ENCODE measurements at regions of chr19 and their contacts with region 1.

Region 1: DNA sequence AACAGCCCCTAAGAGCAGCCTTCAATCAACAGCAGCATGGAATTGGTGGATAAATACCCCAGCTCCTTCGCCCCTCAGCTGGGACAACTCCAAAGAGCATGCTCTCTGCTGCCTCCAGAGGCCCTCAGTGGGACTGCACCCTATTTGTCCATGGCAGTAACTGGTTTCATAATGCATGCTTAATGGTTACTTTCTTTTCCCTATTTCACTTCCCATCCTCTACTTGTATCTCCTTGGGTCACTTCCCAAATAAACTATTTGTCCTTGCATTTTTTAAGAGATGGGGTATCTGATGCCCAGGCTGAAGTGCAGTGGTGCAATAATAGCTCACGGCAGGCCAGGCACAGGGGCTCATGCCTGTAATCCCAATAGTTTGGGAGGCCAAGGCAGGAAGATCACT is 13.5 kb upstream of the TPM4 start:
- DNase-seq: peak; percentile 75
- ATAC-seq: peak; percentile 45
- H3K4me3 Mint-ChIP-seq: no peak overlapping the region
- H3K27ac Mint-ChIP-seq: no peak overlapping the region
- H3K4me1 Mint-ChIP-seq: peaks cover 34% of the 10 kb centered on the region
- H3K27me3 Mint-ChIP-seq: peaks cover 12% of the 10 kb centered on the region

Region 2: GRCh38 chr19:15986701-15987100 is 76.1 kb before region 1 on chr19:
- CTCF ChIA-PET with region 1: no interaction called
- POLR2A ChIA-PET with region 1: no interaction called
- DNase-seq: no peak
- ATAC-seq: no peak
- H3K4me3 Mint-ChIP-seq: no peak overlapping the region
- H3K27ac Mint-ChIP-seq: no peak overlapping the region
- H3K4me1 Mint-ChIP-seq: peaks cover 15% of the 10 kb centered on the region
- H3K27me3 Mint-ChIP-seq: peaks cover 27% of the 10 kb centered on the region

Region 3: DNA sequence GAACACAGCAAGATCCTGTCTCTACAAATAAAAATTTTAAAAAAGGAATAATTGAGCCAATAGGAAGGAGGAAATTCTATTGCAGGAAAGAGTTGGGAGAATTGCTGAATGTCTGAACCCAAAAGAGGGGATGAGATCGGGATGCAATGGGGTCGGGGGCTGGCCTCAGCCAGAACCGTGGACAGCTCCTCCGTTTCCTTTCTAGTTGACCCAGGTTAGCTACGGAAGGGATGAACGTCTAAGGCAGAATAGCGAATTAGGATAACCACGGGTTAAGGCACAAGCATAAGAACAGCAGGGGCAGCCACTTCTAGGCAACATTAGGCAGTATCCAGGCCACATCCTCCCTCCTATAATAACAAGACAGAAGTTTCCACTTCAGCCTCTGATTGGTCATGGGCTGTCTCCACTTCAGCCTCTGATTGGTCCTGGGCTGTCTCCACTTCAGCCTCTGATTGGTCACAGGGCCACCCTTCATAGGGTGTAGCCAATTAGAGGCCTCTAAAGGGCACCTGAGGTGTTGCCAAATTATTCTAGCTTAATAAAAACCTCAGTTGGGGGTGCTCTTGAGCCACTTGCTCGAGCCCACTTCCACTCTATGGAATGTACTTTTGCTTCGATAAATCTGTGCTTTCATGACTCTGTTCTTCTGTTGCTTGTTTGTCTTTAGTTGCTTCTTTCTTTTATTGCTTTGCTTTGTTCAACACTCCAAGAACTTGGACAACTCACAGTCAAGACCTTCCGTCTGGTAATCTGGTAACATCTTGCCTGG is 11.3 kb before region 1 on chr19:
- CTCF ChIA-PET with region 1: interaction called, 12 read pairs
- POLR2A ChIA-PET with region 1: interaction called, 3 read pairs
- DNase-seq: peak; percentile 71
- ATAC-seq: peak; percentile 100
- H3K4me3 Mint-ChIP-seq: no peak overlapping the region
- H3K27ac Mint-ChIP-seq: no peak overlapping the region
- H3K4me1 Mint-ChIP-seq: peaks cover 17% of the 10 kb centered on the region
- H3K27me3 Mint-ChIP-seq: peaks cover 11% of the 10 kb centered on the region

Region 4: DNA sequence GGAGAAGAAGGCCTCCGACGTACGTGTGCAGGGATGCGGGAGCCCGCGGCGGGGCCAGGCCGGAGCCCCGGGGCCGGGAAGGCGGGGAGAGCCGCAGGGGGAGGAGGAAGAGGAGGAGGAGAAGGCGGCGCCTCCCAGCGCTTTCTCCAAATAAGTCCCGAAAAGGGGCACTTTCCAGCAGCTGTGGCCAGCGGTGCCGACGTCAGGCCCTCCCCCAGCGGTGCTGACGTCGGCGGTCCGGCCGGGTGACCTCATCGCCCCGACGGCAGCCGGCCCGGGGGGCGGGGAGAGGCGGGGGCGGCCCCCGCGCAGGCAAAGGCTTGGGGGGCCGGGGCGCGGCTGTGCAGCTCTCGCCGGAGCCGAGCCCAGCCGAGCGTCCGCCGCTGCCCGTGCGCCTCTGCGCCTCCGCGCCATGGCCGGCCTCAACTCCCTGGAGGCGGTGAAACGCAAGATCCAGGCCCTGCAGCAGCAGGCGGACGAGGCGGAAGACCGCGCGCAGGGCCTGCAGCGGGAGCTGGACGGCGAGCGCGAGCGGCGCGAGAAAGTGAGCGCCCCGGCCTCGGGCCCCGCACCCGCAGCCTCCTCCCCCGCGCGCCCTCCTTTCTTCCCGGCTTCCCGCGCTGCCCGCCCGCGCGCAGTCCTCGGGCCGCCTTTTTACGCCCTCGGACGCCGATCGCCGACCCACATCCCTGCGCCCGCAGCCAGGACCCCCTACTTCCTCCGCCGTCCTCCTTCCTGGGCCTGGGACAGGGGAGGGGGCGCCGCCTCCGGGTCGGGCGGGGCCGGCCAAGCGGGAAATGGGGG is 13.6 kb after region 1 on chr19 and contains the start of gene TPM4:
- CTCF ChIA-PET with region 1: interaction called, 92 read pairs
- POLR2A ChIA-PET with region 1: interaction called, 17 read pairs
- DNase-seq: peak; percentile 95
- ATAC-seq: peak; percentile 64
- H3K4me3 Mint-ChIP-seq: peak within 1 kb of the TSS; percentile 82
- H3K27ac Mint-ChIP-seq: peak within 1 kb of the TSS; percentile 96
- H3K4me1 Mint-ChIP-seq: peaks cover 71% of the 10 kb centered on the region
- H3K27me3 Mint-ChIP-seq: no peaks in the 10 kb centered on the region
- total RNA-seq, gene TPM4: 424 to 436 TPM

Region 5: GRCh38 chr19:16088351-16089009 is 25.7 kb after region 1 on chr19:
- CTCF ChIA-PET with region 1: interaction called, 35 read pairs
- POLR2A ChIA-PET with region 1: interaction called, 8 read pairs
- DNase-seq: no peak
- ATAC-seq: no peak
- H3K4me3 Mint-ChIP-seq: no peak overlapping the region
- H3K27ac Mint-ChIP-seq: peak overlapping the region; percentile 37
- H3K4me1 Mint-ChIP-seq: peaks cover 66% of the 10 kb centered on the region
- H3K27me3 Mint-ChIP-seq: no peaks in the 10 kb centered on the region

Region 6: DNA sequence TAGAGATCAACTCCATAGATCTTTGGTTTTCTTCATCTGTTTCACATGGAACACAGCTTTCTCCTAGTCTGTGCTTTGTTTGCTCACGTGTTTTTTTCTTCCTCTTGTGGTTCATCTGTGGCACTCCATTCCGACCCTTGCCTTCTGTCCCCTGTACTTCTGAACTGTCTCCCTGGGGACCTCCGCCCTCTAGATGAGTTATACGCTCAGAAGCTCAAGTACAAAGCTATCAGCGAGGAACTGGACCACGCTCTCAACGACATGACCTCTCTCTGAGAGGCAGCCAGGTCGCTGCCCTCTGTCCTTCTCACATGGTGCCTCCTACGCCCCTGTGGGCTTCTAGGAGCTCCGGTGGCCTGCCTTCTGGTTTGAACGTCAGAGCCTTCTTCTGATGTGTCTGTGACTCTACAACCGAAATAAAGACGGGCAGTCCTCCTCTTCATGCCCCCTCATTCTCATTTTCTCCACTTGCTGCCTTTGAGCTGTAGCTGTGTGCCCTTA is 32.3 kb after region 1 on chr19:
- CTCF ChIA-PET with region 1: interaction called, 13 read pairs
- POLR2A ChIA-PET with region 1: no interaction called
- DNase-seq: no peak
- ATAC-seq: peak; percentile 65
- H3K4me3 Mint-ChIP-seq: no peak overlapping the region
- H3K27ac Mint-ChIP-seq: peak overlapping the region; percentile 67
- H3K4me1 Mint-ChIP-seq: peaks cover 49% of the 10 kb centered on the region
- H3K27me3 Mint-ChIP-seq: no peaks in the 10 kb centered on the region

Region 7: GRCh38 chr19:16125737-16126495 is 63.1 kb after region 1 on chr19:
- CTCF ChIA-PET with region 1: no interaction called
- POLR2A ChIA-PET with region 1: no interaction called
- DNase-seq: no peak
- ATAC-seq: no peak
- H3K4me3 Mint-ChIP-seq: no peak overlapping the region
- H3K27ac Mint-ChIP-seq: no peak overlapping the region
- H3K4me1 Mint-ChIP-seq: peaks cover 22% of the 10 kb centered on the region
- H3K27me3 Mint-ChIP-seq: no peaks in the 10 kb centered on the region

Region 8: DNA sequence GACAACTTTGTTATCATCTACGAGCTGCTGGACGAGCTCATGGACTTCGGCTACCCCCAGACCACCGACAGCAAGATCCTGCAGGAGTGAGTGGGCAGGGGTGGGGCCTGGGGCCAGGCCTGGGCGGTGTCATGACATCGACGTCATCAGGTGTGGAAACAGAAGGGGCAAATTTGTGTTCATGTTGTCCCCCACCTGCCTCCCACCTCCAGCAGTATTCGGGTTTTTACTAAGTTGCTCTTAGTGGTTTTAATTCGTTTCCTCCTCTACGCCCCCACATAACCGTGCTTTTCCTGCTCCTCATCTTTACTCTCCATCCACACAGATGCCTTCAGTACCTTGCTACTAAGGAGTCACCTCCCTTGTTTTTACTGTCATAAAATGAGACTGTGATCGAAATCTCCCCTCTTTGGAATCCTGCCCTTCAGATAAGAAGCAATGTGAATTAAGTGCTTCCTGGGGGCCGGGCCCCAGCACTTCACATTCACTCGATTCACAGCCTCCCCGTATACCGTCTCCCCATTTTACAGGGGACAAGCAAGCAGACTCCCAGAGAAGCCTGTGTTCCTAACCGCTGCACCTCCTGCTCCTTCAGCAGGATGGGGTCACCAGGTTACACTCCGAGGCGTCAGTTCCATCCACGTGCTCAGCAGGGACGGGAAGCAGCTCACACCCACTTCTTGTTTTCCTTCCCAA is 145.4 kb after region 1 on chr19:
- CTCF ChIA-PET with region 1: no interaction called
- POLR2A ChIA-PET with region 1: no interaction called
- DNase-seq: no peak
- ATAC-seq: peak; percentile 32
- H3K4me3 Mint-ChIP-seq: no peak overlapping the region
- H3K27ac Mint-ChIP-seq: peak overlapping the region; percentile 6
- H3K4me1 Mint-ChIP-seq: peaks cover 66% of the 10 kb centered on the region
- H3K27me3 Mint-ChIP-seq: no peaks in the 10 kb centered on the region

Region 9: DNA sequence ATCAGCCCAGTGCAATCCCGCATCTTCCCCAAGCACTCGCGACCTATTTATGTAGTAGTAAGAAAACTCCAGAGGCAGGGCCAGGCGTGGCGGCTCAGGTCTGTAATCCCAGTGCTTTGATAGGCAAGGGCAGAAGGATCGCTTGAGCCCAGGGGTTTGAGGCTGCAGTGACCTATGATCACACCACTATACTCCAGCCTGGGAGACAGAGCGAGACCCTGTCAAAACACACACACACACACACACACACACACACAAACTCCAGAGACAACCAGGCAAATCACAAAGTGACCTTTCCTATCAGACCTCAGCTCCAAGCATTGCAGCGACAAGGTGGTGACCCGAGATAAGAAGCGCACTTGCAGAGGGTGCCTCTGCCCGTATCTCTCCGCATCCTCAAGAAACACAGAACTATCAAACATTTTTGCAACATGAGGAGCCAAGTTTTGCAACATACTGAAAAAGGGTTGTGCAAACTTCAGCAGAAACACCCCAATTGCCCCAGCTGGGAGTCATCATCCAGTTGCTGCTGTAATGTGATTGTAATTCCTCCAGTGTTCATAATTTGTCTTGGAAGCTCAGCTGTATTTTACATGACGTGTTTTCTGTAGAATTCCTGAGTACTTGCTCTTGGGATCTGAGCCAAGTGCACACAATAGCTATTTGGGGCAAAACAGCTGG is 253.2 kb after region 1 on chr19:
- CTCF ChIA-PET with region 1: no interaction called
- POLR2A ChIA-PET with region 1: no interaction called
- DNase-seq: no peak
- ATAC-seq: no peak
- H3K4me3 Mint-ChIP-seq: no peak overlapping the region
- H3K27ac Mint-ChIP-seq: no peak overlapping the region
- H3K4me1 Mint-ChIP-seq: peaks cover 9% of the 10 kb centered on the region
- H3K27me3 Mint-ChIP-seq: peaks cover 30% of the 10 kb centered on the region